CD4-positive, alpha-beta T cell (primary cell): ENCODE measurements at regions of chr1 and their contacts with region 1.

Region 1: DNA sequence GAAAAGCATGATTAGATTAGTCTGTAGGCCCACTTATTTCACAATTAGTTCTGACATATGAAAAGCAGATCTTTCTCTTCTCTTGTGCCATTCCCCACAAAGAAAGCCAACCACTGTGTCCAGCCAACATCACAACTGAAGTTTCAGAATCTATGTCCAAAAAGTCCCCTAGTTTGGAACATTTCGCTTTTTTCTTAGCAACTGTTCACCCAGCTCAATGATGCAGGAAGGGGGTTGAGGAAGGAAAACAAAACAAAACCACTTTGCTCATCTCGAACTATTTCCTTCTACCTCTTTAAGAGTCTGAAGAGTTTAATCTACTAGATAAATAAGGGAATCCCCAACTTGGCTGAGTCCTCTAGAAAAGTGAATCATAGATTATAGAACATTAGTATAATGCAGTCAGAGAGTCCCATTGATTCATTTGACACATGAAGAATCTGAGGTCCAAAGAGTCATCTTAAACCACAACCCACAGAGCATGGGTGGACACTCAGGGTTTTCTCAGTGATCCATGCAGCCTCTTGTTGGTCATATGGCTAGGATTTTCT is 159.3 kb upstream of the SGIP1 start:
- DNase-seq: peak in 4 of 14 experiments; percentile 19 to 78 (median 74)
- ATAC-seq: peak; percentile 76
- H3K4me3 ChIP-seq: no peak overlapping the region
- H3K4me3 Mint-ChIP-seq: peak overlapping the region; percentile 75
- H3K27ac ChIP-seq: peak overlapping the region; percentile 54 to 57
- H3K27ac Mint-ChIP-seq: peak overlapping the region; percentile 93
- H3K4me1 ChIP-seq: peaks cover 59% of the 10 kb centered on the region
- H3K4me1 Mint-ChIP-seq: peaks cover 66% of the 10 kb centered on the region
- H3K27me3 ChIP-seq: no peaks in the 10 kb centered on the region
- H3K27me3 Mint-ChIP-seq: no peaks in the 10 kb centered on the region
- CTCF ChIP-seq: no peak

Region 2: DNA sequence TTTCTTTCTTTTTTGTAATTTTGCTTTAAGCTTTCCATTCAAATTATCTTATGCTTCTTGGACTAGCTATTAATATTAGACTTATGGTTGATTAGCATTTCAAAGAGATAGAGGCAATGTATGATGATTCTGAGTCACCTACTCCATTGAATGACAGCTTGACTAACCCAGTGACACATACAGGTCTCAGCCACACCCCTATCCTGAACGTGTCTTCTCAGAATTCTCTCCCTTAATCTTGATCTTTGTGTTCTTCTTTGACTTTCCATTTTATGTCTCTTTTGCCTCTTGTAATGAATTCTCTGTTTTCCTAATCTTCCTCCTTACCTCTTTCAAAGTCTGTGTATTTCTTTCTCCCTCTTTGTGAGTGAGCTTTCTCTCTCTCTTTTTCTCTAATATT is 340.9 kb before region 1 on chr1:
- CTCF ChIA-PET with region 1: no interaction called
- POLR2A ChIA-PET with region 1: no interaction called
- intact Hi-C with region 1: no loop called
- DNase-seq: no peak
- ATAC-seq: no peak
- H3K4me3 ChIP-seq: no peak overlapping the region
- H3K4me3 Mint-ChIP-seq: no peak overlapping the region
- H3K27ac ChIP-seq: no peak overlapping the region
- H3K27ac Mint-ChIP-seq: no peak overlapping the region
- H3K4me1 ChIP-seq: no peaks in the 10 kb centered on the region
- H3K4me1 Mint-ChIP-seq: no peaks in the 10 kb centered on the region
- H3K27me3 ChIP-seq: peaks cover 0 to 2% of the 10 kb centered on the region in 2 experiments
- H3K27me3 Mint-ChIP-seq: peaks cover 28% of the 10 kb centered on the region
- CTCF ChIP-seq: no peak

Region 3: DNA sequence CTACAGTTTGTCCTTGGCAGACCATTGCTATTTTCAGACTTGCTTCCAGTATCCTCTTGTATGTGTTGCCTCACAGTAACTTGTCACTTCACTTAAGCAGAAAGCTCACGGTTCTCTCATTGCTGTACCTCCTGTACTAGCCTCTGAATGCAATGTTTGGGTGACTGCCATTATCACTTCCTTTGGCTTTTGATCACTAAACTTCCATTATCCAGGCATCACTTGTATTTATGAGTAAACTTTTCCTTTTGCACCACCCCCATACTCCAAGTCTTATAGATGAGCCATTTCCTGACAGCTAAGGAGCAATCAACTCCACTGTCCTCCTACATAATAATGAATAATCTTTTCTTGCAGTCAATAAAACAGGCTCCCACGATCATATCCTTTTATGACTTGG is 326.6 kb before region 1 on chr1:
- CTCF ChIA-PET with region 1: no interaction called
- POLR2A ChIA-PET with region 1: no interaction called
- intact Hi-C with region 1: no loop called
- DNase-seq: no peak
- ATAC-seq: no peak
- H3K4me3 ChIP-seq: no peak overlapping the region
- H3K4me3 Mint-ChIP-seq: no peak overlapping the region
- H3K27ac ChIP-seq: no peak overlapping the region
- H3K27ac Mint-ChIP-seq: no peak overlapping the region
- H3K4me1 ChIP-seq: no peaks in the 10 kb centered on the region
- H3K4me1 Mint-ChIP-seq: no peaks in the 10 kb centered on the region
- H3K27me3 ChIP-seq: peaks cover 0 to 10% of the 10 kb centered on the region in 2 experiments
- H3K27me3 Mint-ChIP-seq: peaks cover 17% of the 10 kb centered on the region
- CTCF ChIP-seq: no peak

Region 4: GRCh38 chr1:66207484-66207883 is 167.2 kb before region 1 on chr1:
- CTCF ChIA-PET with region 1: no interaction called
- POLR2A ChIA-PET with region 1: no interaction called
- intact Hi-C with region 1: no loop called
- DNase-seq: no peak
- ATAC-seq: no peak
- H3K4me3 ChIP-seq: no peak overlapping the region
- H3K4me3 Mint-ChIP-seq: no peak overlapping the region
- H3K27ac ChIP-seq: no peak overlapping the region
- H3K27ac Mint-ChIP-seq: no peak overlapping the region
- H3K4me1 ChIP-seq: peaks cover 6% of the 10 kb centered on the region
- H3K4me1 Mint-ChIP-seq: no peaks in the 10 kb centered on the region
- H3K27me3 ChIP-seq: no peaks in the 10 kb centered on the region
- H3K27me3 Mint-ChIP-seq: peaks cover 12% of the 10 kb centered on the region
- CTCF ChIP-seq: no peak

Region 5: DNA sequence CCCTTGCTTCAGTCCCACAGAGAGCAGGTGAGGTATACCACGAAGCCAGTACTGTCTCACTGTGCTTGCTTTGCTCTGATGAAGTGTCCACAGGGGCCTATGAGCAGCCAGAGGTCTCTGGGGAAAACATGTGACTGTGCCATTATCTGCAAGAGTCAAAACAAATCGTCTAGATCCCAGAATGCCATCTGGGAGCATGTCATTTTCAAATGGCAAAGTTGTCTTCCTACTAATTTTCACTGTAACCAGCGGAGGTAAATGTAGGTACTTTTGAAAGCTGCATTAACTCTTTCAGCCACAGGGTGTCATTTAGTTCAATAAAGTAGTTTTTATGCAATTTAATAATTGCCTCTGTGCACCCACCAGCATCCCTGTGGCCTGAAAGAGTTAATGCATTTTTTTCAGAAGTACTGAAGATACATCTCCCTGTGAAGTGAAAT is 14.3 kb before region 1 on chr1:
- CTCF ChIA-PET with region 1: no interaction called
- POLR2A ChIA-PET with region 1: interaction called, 9 read pairs
- intact Hi-C with region 1: loop called in 1 of 2 experiments (anchors 2 kb)
- DNase-seq: no peak
- ATAC-seq: no peak
- H3K4me3 ChIP-seq: no peak overlapping the region
- H3K4me3 Mint-ChIP-seq: no peak overlapping the region
- H3K27ac ChIP-seq: peak overlapping the region in 1 of 2 donors; percentile 16
- H3K27ac Mint-ChIP-seq: peak overlapping the region; percentile 19
- H3K4me1 ChIP-seq: peaks cover 39% of the 10 kb centered on the region
- H3K4me1 Mint-ChIP-seq: peaks cover 78% of the 10 kb centered on the region
- H3K27me3 ChIP-seq: no peaks in the 10 kb centered on the region
- H3K27me3 Mint-ChIP-seq: no peaks in the 10 kb centered on the region
- CTCF ChIP-seq: no peak